ENCODE measurements at regions of chr14 and their contacts with region 1.

Region 1: DNA sequence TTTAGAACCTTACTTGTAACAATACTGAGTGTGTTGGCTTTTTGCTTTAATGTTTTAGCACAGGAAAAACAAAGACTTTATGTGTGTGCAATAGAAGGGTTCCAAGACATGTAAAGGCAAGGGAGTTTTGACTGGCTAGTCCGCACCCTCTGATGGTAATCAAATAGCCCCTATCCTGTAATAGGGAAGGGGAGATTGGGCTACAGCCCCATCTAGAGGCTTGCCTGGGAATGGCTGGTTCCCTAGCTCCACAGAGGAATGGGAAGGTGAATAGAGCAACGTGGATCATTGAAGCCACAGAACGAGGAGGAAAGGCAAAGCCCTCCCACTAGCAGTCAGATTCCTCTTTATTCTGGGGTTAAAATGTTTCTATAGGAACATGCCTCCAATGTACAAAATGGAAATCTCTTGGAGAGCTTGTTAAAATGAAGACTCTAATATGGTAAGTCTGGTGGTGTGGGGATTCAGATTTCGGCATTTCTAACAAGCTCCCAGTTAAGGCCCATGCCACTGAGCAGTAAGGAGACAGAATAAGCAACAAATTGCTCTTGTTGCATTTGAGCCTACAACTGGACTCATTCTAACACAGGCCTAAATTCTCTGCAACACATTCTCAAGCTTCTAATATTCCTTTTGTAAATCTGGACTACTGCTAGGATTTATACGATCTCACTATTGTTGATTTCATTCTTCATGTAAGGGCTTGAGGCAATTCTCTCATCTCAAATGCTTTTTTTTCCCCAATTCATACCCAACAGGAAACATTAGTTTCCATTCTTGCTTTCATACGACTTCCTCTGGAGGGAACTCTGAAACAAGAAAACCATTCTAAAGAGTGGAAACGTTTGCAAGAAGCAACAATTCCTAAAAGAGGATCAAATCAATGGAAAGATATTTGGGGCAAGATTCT is 57.1 kb downstream of the NIN start:
- DNase-seq: peak in 1 of 5 donors; percentile 25
- ATAC-seq: peak in 3 of 4 donors; percentile 37 to 70 (median 55)
- H3K4me3 ChIP-seq: no peak overlapping the region
- H3K27ac ChIP-seq: no peak overlapping the region
- H3K4me1 ChIP-seq: peaks cover 0 to 31% (median 18%) of the 10 kb centered on the region in 12 donors
- H3K27me3 ChIP-seq: no peaks in the 10 kb centered on the region
- CTCF ChIP-seq: peak; percentile 45 to 74 (median 64)
- POLR2A ChIP-seq: no peak

Region 2: DNA sequence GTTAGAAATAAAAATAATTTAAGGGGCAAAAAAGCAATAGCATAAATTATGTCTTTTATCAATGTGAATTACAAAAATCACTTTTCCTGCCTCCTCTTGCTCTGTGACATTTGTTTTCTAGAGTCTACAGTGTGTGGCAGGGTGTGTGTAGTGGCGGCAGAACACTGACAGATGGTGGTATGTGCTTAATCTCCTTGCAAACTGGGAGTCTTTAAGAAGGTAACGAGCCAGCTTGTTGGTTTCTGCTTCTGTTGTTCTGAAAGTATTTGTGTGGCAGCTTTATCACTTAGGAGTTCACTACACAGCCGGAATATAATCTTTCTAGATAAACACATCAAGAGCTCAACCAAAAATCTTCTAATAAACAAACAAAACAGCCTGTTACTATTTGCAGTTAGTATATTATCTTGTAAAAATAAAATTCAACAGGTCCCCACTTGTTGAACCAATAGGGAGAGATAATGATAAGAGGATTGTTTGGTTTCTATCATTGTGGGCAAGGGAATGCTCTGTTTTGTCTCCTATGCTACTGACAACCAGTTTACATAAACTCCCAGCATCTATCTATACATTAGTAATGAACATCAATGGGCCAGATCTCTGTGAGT is 390.2 kb before region 1 on chr14:
- intact Hi-C with region 1: no loop called
- DNase-seq: no peak
- ATAC-seq: no peak
- H3K4me3 ChIP-seq: no peak overlapping the region
- H3K27ac ChIP-seq: no peak overlapping the region
- H3K4me1 ChIP-seq: peaks cover 0 to 4% (median 0%) of the 10 kb centered on the region in 12 donors
- H3K27me3 ChIP-seq: no peaks in the 10 kb centered on the region
- CTCF ChIP-seq: no peak
- POLR2A ChIP-seq: no peak

Region 3: DNA sequence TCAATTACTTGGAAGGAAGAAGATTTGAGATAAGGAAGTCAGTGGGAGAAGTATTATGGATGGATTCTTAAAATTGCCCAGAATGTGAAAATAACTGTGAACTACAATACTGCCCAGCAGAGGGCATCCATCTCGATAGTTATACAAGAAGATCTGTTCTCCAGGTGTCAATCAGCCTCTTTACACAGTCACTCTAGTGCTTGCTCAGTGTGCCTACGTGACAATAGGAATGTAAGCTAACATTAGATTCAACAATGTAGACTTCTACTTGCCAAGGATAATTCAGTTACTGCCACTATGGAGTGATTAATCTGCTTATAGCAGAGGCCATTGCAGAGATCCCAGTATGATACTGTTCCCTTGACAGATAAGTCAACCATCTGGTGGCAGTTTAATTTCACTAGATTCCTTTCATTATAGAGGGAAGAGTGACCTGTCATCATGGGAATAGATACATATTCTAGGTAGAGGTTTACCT is 230.9 kb before region 1 on chr14:
- intact Hi-C with region 1: loop called in 4 of 10 experiments (anchors 2 to 5 kb)
- DNase-seq: no peak
- ATAC-seq: peak in 2 of 4 donors; percentile 18 to 60
- H3K4me3 ChIP-seq: no peak overlapping the region
- H3K27ac ChIP-seq: no peak overlapping the region
- H3K4me1 ChIP-seq: peaks cover 0 to 6% (median 0%) of the 10 kb centered on the region in 12 donors
- H3K27me3 ChIP-seq: no peaks in the 10 kb centered on the region
- CTCF ChIP-seq: peak; percentile 32 to 63 (median 50)
- POLR2A ChIP-seq: no peak

Region 4: GRCh38 chr14:50619556-50620141 is 154.2 kb before region 1 on chr14:
- intact Hi-C with region 1: loop called in 1 of 10 experiments (anchors 5 kb)
- DNase-seq: no peak
- ATAC-seq: peak in 3 of 4 donors; percentile 32 to 53 (median 41)
- H3K4me3 ChIP-seq: no peak overlapping the region
- H3K27ac ChIP-seq: no peak overlapping the region
- H3K4me1 ChIP-seq: no peaks in the 10 kb centered on the region
- H3K27me3 ChIP-seq: no peaks in the 10 kb centered on the region
- CTCF ChIP-seq: peak; percentile 46 to 70 (median 58)
- POLR2A ChIP-seq: no peak

Region 5: GRCh38 chr14:50667996-50668825 is 105.7 kb before region 1 on chr14 and contains the start of gene SAV1:
- intact Hi-C with region 1: no loop called
- DNase-seq: peak; percentile 86 to 92 (median 89)
- ATAC-seq: peak; percentile 81 to 97 (median 94)
- H3K4me3 ChIP-seq: peak within 1 kb of the TSS; percentile 65 to 98 (median 92)
- H3K27ac ChIP-seq: peak within 1 kb of the TSS; percentile 89 to 98 (median 94)
- H3K4me1 ChIP-seq: peaks cover 0 to 43% (median 19%) of the 10 kb centered on the region in 12 donors
- H3K27me3 ChIP-seq: no peaks in the 10 kb centered on the region
- CTCF ChIP-seq: peak in 1 of 12 donors; percentile 6
- POLR2A ChIP-seq: peak in 1 of 2 donors; percentile 88
- total RNA-seq, gene SAV1: 22.0 to 35.3 (median 25.4) TPM

Region 6: GRCh38 chr14:50726372-50727107 is 47.3 kb before region 1 on chr14:
- intact Hi-C with region 1: loop called in 2 of 10 experiments (anchors 10 kb)
- DNase-seq: no peak
- ATAC-seq: no peak
- H3K4me3 ChIP-seq: no peak overlapping the region
- H3K27ac ChIP-seq: peak overlapping the region in 1 of 12 donors; percentile 57
- H3K4me1 ChIP-seq: peaks cover 0 to 12% (median 0%) of the 10 kb centered on the region in 12 donors
- H3K27me3 ChIP-seq: no peaks in the 10 kb centered on the region
- CTCF ChIP-seq: no peak
- POLR2A ChIP-seq: no peak

Region 7: DNA sequence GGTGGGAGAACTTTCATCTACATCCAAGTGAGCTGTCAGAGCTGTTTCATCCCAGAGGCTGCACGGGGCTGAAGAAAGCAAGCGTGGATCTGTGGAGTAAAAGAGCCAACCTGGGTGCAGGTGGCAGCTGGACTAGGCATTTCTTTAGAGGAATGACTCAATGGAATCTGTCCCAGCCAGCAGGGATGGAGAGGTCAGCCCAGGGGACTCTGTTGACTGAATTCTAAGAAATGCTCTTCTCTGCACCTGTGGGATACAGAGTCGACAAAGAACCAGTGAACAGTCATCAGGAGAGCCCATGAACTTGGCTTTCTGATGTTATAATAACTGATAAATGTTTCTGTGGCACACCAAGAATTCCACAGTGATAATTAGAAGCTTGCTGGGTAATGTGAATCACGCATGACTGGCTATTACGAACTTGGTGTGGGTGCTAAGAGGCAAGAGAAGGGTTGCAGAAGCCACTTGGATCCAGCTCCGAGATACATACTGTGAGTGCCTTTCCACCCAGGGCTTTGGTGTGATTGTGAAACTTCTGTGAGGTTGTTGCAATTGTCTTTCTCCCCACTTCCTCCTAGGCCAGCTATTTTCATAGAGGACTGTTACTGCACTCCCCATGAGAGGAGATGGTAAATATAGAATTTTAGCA is 154.2 kb after region 1 on chr14:
- intact Hi-C with region 1: no loop called
- DNase-seq: peak in 1 of 5 donors; percentile 11
- ATAC-seq: peak in 3 of 4 donors; percentile 58 to 82 (median 72)
- H3K4me3 ChIP-seq: no peak overlapping the region
- H3K27ac ChIP-seq: peak overlapping the region in 1 of 12 donors; percentile 84
- H3K4me1 ChIP-seq: peaks cover 0 to 36% (median 0%) of the 10 kb centered on the region in 12 donors
- H3K27me3 ChIP-seq: no peaks in the 10 kb centered on the region
- CTCF ChIP-seq: no peak
- POLR2A ChIP-seq: no peak

Measured in heart left ventricle (tissue), 16 donors.